GM12878 (cell line): ENCODE measurements at regions of chr1 and their contacts with region 1.

Region 1: GRCh38 chr1:25442178-25442577 is 11.5 kb downstream of the MACO1 start:
- DNase-seq: no peak
- ATAC-seq: no peak
- H3K4me3 ChIP-seq: no peak overlapping the region
- H3K27ac ChIP-seq: no peak overlapping the region
- H3K4me1 ChIP-seq: peaks cover 11% of the 10 kb centered on the region; the same call in 1 of the 2 replicates
- H3K27me3 ChIP-seq: no peaks in the 10 kb centered on the region
- CTCF ChIP-seq: no peak; a peak in 1 of 6 replicates
- EP300 ChIP-seq: no peak
- POLR2A ChIP-seq: no peak
- RAD21 ChIP-seq: no peak

Region 2: GRCh38 chr1:25469177-25469576 is 27.0 kb after region 1 on chr1:
- CTCF ChIA-PET with region 1: interaction called, 4 read pairs
- POLR2A ChIA-PET with region 1: interaction called, 14 read pairs
- RAD21 ChIA-PET with region 1: interaction called, 26 read pairs
- SMC1A ChIA-PET with region 1: interaction called, 78 read pairs
- in situ Hi-C with region 1: no loop called
- intact Hi-C with region 1: no loop called
- DNase-seq: no peak
- ATAC-seq: no peak
- H3K4me3 ChIP-seq: no peak overlapping the region
- H3K27ac ChIP-seq: no peak overlapping the region
- H3K4me1 ChIP-seq: peaks cover 11% of the 10 kb centered on the region
- H3K27me3 ChIP-seq: no peaks in the 10 kb centered on the region
- CTCF ChIP-seq: no peak
- EP300 ChIP-seq: no peak
- POLR2A ChIP-seq: no peak
- RAD21 ChIP-seq: no peak

Region 3: DNA sequence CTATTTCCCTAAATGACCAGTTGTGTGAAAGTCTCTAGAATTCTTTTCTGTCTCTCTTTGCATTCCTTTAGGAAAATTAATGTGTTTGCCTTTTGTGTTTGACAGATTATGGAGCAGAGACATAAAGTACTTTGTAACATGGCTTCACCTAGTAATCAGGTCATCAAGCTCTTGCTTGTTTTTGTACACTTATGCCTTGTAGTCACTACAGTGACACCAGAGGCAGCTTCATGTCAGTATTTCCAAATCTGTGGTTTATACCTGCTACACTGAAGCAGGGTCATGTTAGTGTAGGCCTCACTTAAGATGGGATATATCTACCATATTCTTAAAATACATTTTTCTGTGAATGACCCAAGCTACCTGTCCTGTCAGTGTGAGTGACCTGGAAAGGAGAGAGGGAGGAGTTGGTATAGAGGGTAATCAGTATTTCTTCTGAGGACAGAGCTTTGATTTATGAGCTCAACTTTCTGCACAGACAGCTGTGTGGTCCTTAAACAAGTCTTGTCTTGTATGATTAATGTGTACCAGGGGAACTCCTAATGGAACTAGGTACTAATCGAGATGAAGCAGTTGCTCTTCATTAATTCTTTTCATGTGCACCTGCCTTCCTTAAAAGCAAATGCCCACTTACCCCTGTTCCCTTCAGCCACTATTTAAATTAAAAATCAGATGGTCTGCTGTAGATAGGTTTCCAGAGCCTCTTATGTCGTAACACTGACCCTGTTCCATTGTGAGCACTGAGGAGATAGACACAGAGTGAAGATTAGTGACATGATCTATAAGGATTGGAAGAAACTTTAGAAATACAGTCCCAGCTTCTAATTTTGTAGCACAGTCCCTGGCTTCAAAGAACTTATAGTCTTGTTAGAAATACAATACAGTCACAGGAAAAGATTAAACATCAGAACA is 34.3 kb after region 1 on chr1:
- CTCF ChIA-PET with region 1: interaction called, 36 read pairs
- POLR2A ChIA-PET with region 1: interaction called, 19 read pairs
- RAD21 ChIA-PET with region 1: interaction called, 56 read pairs
- SMC1A ChIA-PET with region 1: interaction called, 78 read pairs
- in situ Hi-C with region 1: no loop called
- intact Hi-C with region 1: no loop called
- DNase-seq: peak; percentile 26
- ATAC-seq: peak; percentile 55
- H3K4me3 ChIP-seq: no peak overlapping the region
- H3K27ac ChIP-seq: peak overlapping the region; percentile 13; the same call in 1 of the 2 replicates
- H3K4me1 ChIP-seq: peaks cover 13% of the 10 kb centered on the region
- H3K27me3 ChIP-seq: no peaks in the 10 kb centered on the region
- CTCF ChIP-seq: no peak
- EP300 ChIP-seq: peak in 1 of 2 experiments; percentile 68; a peak in 2 of 4 replicates
- POLR2A ChIP-seq: no peak
- RAD21 ChIP-seq: no peak

Region 4: DNA sequence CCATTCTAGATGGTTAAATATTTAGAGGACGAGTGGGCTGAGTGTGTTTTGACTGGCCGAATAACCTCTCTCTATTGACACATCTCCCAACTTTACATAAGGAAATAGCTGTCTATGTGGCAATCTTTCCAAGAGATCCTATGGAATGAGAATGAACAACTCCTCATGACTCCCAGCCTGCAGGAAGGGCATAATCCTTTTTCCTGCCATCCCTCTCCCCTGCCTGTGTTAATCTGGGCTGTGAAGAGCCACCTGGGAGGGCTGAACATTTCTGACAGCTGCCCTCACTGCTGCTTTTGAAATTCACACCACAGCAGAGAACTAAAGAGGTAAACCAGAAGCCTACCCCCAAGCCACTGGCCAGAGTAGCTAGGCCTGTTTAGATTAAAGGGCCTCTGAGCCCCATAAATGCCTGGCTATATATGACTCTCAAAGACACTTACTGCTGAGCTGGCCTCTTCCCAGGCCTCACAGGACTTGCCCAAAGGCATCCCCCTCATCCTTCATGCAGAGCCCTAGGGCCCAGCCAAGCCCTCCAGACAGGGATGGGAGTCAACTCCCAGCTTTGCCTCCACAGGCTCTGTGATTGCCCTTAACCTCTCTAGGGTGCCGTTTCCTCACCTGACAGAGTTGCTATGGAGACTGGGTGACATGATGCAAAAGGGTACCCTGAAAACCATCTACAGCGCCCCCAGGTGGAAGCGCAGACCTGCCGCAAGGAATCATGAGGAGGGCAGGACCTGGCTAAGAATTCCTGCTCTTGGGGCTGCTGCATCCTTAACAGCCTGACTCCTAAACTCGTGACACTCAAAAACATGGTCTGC is 59.3 kb after region 1 on chr1:
- CTCF ChIA-PET with region 1: no interaction called
- POLR2A ChIA-PET with region 1: no interaction called
- RAD21 ChIA-PET with region 1: no interaction called
- SMC1A ChIA-PET with region 1: no interaction called
- in situ Hi-C with region 1: no loop called
- intact Hi-C with region 1: no loop called
- DNase-seq: no peak
- ATAC-seq: no peak; the same call in 2 of the 3 replicates
- H3K4me3 ChIP-seq: no peak overlapping the region
- H3K27ac ChIP-seq: no peak overlapping the region
- H3K4me1 ChIP-seq: no peaks in the 10 kb centered on the region
- H3K27me3 ChIP-seq: no peaks in the 10 kb centered on the region
- CTCF ChIP-seq: peak in 2 of 3 experiments; percentile 12 to 27; a peak in 2 of 6 replicates
- EP300 ChIP-seq: no peak
- POLR2A ChIP-seq: no peak
- RAD21 ChIP-seq: no peak